Naive thymus-derived CD4-positive, alpha-beta T cell (primary cell): ENCODE measurements at regions of chr4 and their contacts with region 1.

Region 1: DNA sequence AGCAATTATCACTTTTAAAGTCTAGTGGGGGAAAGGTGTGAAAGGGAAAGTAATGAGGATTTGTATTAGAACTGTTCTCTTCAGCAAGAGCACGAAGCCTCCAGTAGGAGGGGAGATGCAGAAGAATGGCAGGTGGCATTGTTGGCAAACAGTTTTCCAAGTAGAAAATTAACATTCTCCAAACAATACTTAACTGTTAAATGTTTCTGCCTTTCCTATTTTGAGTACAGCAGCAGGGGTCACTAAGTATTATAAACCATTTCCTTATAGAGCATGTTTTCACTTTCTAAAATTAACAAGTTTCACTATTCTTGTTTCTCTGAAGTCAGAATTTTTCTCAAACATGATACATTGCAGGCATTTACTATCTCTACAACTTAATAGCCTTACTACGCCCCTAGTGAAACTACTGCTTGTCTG is 58.7 kb downstream of the LEF1 start:
- DNase-seq: no peak
- ATAC-seq: no peak
- H3K4me3 ChIP-seq: peak overlapping the region; percentile 7
- H3K4me3 Mint-ChIP-seq: peak overlapping the region; percentile 69 to 89 (median 78)
- H3K27ac ChIP-seq: peak overlapping the region; percentile 80
- H3K27ac Mint-ChIP-seq: peak overlapping the region; percentile 84 to 98 (median 90)
- H3K4me1 ChIP-seq: peaks cover 72 to 98% of the 10 kb centered on the region in 2 donors
- H3K4me1 Mint-ChIP-seq: peaks cover 70 to 97% (median 95%) of the 10 kb centered on the region in 7 donors
- H3K27me3 ChIP-seq: no peaks in the 10 kb centered on the region
- H3K27me3 Mint-ChIP-seq: no peaks in the 10 kb centered on the region

Region 2: DNA sequence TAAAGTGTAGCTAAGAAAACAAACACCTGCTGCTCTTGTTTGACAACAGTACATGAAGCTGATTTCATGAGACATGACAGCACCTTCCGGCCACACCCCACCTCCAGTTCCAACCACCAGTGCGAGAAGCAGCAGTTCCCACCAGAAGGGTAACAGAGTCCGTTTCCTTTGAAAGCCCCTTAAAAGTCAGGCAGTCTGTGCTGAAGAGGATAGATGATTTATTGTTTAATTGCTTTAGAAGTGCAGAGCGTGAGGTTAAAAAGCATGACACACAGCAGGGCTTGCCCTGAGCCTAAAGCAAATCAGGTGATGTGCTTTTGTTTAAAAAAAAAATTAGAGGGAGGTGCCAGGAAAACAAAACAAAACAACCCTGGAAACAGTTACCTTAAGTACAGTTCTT is 37.7 kb before region 1 on chr4:
- CTCF ChIA-PET with region 1: interaction called, 4 read pairs
- POLR2A ChIA-PET with region 1: interaction called, 10 read pairs
- intact Hi-C with region 1: loop called (anchors 1 to 5 kb)
- DNase-seq: peak in 7 of 9 donors; percentile 63 to 94 (median 80)
- ATAC-seq: peak; percentile 92
- H3K4me3 ChIP-seq: peak overlapping the region; percentile 0
- H3K4me3 Mint-ChIP-seq: peak overlapping the region; percentile 53 to 81 (median 74)
- H3K27ac ChIP-seq: peak overlapping the region; percentile 77
- H3K27ac Mint-ChIP-seq: peak overlapping the region; percentile 84 to 98 (median 94)
- H3K4me1 ChIP-seq: peaks cover 23 to 62% of the 10 kb centered on the region in 2 donors
- H3K4me1 Mint-ChIP-seq: peaks cover 32 to 95% (median 81%) of the 10 kb centered on the region in 7 donors
- H3K27me3 ChIP-seq: no peaks in the 10 kb centered on the region
- H3K27me3 Mint-ChIP-seq: no peaks in the 10 kb centered on the region

Region 3: DNA sequence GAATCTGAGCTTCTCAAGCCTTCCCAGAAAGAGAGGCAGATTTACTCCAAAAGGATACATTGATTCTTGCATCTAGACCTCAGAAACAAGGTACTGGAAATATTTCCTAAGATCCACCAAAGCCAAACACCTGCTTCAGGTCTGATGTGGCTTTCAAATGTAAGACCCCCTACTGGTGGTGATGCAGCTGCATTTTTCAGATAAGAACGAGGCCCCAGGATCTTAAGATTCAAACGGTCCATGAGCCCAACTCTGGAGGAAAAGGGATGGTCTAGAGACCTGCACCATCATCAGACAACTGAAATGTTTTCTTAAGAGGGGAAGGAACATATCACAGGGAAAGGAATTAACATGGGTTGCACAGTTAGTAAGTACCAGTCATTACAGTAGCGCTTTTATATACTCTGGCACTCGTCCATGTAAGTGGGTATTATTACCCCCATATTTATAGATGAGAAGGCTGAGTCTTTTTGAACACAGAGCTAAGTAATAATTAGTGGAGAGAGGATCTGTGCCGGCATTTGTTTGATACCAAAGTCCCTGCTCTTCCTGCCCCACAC is 15.0 kb before region 1 on chr4:
- CTCF ChIA-PET with region 1: interaction called, 6 read pairs
- POLR2A ChIA-PET with region 1: interaction called, 201 read pairs
- intact Hi-C with region 1: loop called in 1 of 2 experiments (anchors 1 kb)
- DNase-seq: no peak
- ATAC-seq: no peak
- H3K4me3 ChIP-seq: no peak overlapping the region
- H3K4me3 Mint-ChIP-seq: peak overlapping the region; percentile 54 to 85 (median 64)
- H3K27ac ChIP-seq: peak overlapping the region; percentile 57
- H3K27ac Mint-ChIP-seq: peak overlapping the region; percentile 35 to 92 (median 90)
- H3K4me1 ChIP-seq: peaks cover 7 to 82% of the 10 kb centered on the region in 2 donors
- H3K4me1 Mint-ChIP-seq: peaks cover 51 to 97% (median 90%) of the 10 kb centered on the region in 7 donors
- H3K27me3 ChIP-seq: no peaks in the 10 kb centered on the region
- H3K27me3 Mint-ChIP-seq: no peaks in the 10 kb centered on the region

Region 4: GRCh38 chr4:108141213-108141950 is 31.4 kb after region 1 on chr4:
- CTCF ChIA-PET with region 1: interaction called, 6 read pairs
- POLR2A ChIA-PET with region 1: interaction called, 400 read pairs
- intact Hi-C with region 1: loop called (anchors 1 kb)
- DNase-seq: peak in 1 of 9 donors; percentile 53
- ATAC-seq: no peak
- H3K4me3 ChIP-seq: peak overlapping the region; percentile 38
- H3K4me3 Mint-ChIP-seq: peak overlapping the region; percentile 79 to 91 (median 84)
- H3K27ac ChIP-seq: peak overlapping the region; percentile 81
- H3K27ac Mint-ChIP-seq: peak overlapping the region; percentile 85 to 98 (median 95)
- H3K4me1 ChIP-seq: peaks cover 26 to 97% of the 10 kb centered on the region in 2 donors
- H3K4me1 Mint-ChIP-seq: peaks cover 61 to 99% (median 95%) of the 10 kb centered on the region in 7 donors
- H3K27me3 ChIP-seq: no peaks in the 10 kb centered on the region
- H3K27me3 Mint-ChIP-seq: no peaks in the 10 kb centered on the region

Region 5: DNA sequence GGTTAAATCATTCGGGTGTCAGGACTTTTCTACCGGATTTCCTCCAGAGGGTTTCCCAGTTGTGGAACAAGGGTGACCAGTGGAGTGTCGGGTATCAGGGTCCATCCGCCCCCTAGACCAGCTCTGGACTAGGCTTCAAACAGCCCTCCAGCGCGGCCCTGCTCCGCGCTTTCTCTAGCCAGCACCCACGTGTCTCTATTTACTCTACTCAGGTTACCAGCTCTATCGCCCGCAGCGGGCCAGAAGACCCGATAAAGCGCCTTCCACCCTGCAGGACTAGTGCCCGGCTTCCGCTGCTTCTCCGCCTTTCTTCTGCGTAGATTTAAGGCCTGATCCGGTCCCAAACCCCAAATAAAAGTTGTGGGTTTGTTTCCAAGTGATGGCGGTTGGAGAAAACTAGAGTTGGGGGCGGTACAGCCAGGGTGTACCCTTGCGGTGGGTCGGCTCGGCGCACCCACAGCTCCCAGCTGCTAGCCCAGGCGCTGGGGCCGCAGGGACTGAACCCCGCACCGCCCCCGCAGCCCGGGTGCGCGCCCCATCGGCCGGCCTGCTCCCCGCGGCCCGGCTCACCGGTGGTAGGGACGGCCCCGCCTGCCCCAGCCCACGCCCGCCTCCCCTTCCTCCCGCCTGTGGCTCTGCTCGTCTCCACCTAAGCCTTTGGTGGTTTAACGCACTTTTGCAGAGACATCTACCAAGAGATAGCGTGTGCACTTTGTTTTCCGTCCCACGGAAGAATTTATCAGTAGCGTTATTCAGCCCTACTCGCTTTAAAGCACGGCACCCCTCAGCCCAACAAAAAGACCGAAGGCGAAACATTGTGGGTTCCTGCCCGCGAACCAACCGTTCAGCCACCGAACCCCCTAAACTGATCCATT is 56.7 kb after region 1 on chr4:
- CTCF ChIA-PET with region 1: interaction called, 3 read pairs
- POLR2A ChIA-PET with region 1: interaction called, 160 read pairs
- intact Hi-C with region 1: loop called (anchors 1 kb)
- DNase-seq: peak; percentile 38 to 89 (median 70)
- ATAC-seq: peak; percentile 41
- H3K4me3 ChIP-seq: peak overlapping the region; percentile 77
- H3K4me3 Mint-ChIP-seq: peak overlapping the region; percentile 89 to 100 (median 98)
- H3K27ac ChIP-seq: peak overlapping the region; percentile 87
- H3K27ac Mint-ChIP-seq: peak overlapping the region; percentile 90 to 98 (median 97)
- H3K4me1 ChIP-seq: peaks cover 8 to 13% of the 10 kb centered on the region in 2 donors
- H3K4me1 Mint-ChIP-seq: peaks cover 13 to 46% (median 25%) of the 10 kb centered on the region in 7 donors
- H3K27me3 ChIP-seq: no peaks in the 10 kb centered on the region
- H3K27me3 Mint-ChIP-seq: peaks cover 0 to 33% (median 0%) of the 10 kb centered on the region in 5 donors

Region 6: GRCh38 chr4:108219998-108220397 is 110.0 kb after region 1 on chr4:
- CTCF ChIA-PET with region 1: no interaction called
- POLR2A ChIA-PET with region 1: no interaction called
- intact Hi-C with region 1: no loop called
- DNase-seq: no peak
- ATAC-seq: no peak
- H3K4me3 ChIP-seq: no peak overlapping the region
- H3K4me3 Mint-ChIP-seq: no peak overlapping the region
- H3K27ac ChIP-seq: no peak overlapping the region
- H3K27ac Mint-ChIP-seq: no peak overlapping the region
- H3K4me1 ChIP-seq: no peaks in the 10 kb centered on the region
- H3K4me1 Mint-ChIP-seq: peaks cover 0 to 8% (median 3%) of the 10 kb centered on the region in 7 donors
- H3K27me3 ChIP-seq: no peaks in the 10 kb centered on the region
- H3K27me3 Mint-ChIP-seq: no peaks in the 10 kb centered on the region